Heart left ventricle (tissue), 16 donors: ENCODE measurements at regions of chr2 and their contacts with region 1.

Region 1: GRCh38 chr2:30691948-30692828 is 115.1 kb downstream of the CAPN13 start:
- DNase-seq: peak in 2 of 5 donors; percentile 61 to 63
- ATAC-seq: peak in 3 of 4 donors; percentile 63 to 75 (median 65)
- H3K4me3 ChIP-seq: no peak overlapping the region
- H3K27ac ChIP-seq: peak overlapping the region in 6 of 12 donors; percentile 29 to 80 (median 48)
- H3K4me1 ChIP-seq: peaks cover 0 to 53% (median 27%) of the 10 kb centered on the region in 12 donors
- H3K27me3 ChIP-seq: no peaks in the 10 kb centered on the region
- CTCF ChIP-seq: peak in 10 of 12 donors; percentile 29 to 57 (median 44)
- POLR2A ChIP-seq: no peak

Region 2: GRCh38 chr2:29238497-29238896 is 1453.7 kb before region 1 on chr2:
- intact Hi-C with region 1: no loop called
- DNase-seq: no peak
- ATAC-seq: peak in 1 of 4 donors; percentile 62
- H3K4me3 ChIP-seq: no peak overlapping the region
- H3K27ac ChIP-seq: no peak overlapping the region
- H3K4me1 ChIP-seq: no peaks in the 10 kb centered on the region
- H3K27me3 ChIP-seq: peaks cover 0 to 49% (median 5%) of the 10 kb centered on the region in 9 donors
- CTCF ChIP-seq: peak; percentile 18 to 59 (median 34)
- POLR2A ChIP-seq: no peak

Region 3: DNA sequence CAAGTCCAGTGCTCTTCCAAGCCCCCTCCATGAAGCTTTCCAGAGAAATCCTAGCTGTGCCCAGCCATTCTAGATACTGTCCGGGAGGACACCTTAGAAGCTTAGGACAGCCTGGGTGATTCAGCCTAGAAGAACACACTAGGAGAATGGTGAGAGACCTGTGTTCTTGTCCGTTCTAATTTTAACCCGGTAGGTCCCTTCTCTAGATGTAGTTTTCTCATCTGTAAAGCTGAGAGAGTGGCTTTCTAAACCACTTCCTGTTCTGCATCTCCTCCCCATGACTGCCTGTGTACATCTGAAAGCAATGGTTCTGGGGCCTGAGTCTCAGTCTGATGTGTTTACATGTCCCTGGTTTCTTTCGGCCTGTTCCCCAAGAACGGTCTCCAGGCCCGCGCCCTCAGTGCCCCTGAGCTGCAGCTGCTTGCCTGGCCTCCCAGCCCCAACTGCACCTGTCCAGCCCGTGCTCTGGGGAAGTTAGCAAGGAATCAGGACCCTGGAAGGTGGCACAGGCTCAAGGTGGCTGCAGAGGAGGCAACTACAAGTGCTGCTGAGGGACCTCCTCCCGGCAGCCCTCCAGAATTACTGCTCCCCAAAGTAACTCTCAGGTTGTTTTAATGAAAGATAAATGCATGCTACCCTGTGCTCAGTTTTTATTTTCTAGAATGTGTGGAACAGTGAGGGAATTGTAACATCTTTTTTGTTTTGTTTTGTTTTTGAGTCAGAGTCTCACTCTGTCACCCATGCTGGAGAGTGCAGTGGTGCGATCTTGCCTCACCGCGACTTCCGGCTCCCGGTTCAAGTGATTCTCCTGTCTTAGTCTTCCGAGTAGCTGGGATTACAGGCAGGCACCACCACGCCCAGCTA is 355.0 kb before region 1 on chr2:
- intact Hi-C with region 1: loop called in 2 of 10 experiments (anchors 5 to 10 kb)
- DNase-seq: no peak
- ATAC-seq: no peak
- H3K4me3 ChIP-seq: no peak overlapping the region
- H3K27ac ChIP-seq: peak overlapping the region in 4 of 12 donors; percentile 26 to 77 (median 60)
- H3K4me1 ChIP-seq: peaks cover 0 to 46% (median 25%) of the 10 kb centered on the region in 12 donors
- H3K27me3 ChIP-seq: no peaks in the 10 kb centered on the region
- CTCF ChIP-seq: no peak
- POLR2A ChIP-seq: no peak

Region 4: DNA sequence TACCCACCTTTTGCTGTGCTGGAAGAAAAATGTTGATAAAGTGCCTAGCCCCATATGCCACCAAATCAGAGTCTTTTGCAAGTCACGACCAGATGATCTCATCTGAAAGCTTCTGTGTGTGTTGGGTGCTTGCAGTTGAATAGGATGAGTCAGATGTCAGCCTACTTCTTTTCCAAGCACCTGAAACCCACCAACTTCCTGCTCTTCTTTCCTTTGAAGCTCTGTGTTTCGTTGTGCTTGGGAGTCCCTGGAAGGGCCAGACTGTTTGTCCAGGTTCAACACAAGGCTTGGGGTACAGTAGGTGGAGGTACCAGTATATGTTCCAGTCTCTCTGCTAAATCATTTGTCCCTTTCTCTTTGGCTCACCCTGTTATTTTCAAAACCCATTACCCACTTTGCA is 282.0 kb before region 1 on chr2:
- intact Hi-C with region 1: loop called in 1 of 10 experiments (anchors 5 kb)
- DNase-seq: no peak
- ATAC-seq: no peak
- H3K4me3 ChIP-seq: no peak overlapping the region
- H3K27ac ChIP-seq: peak overlapping the region in 11 of 12 donors; percentile 51 to 91 (median 82)
- H3K4me1 ChIP-seq: peaks cover 3 to 77% (median 58%) of the 10 kb centered on the region in 12 donors
- H3K27me3 ChIP-seq: no peaks in the 10 kb centered on the region
- CTCF ChIP-seq: no peak
- POLR2A ChIP-seq: no peak

Region 5: GRCh38 chr2:30481323-30481800 is 210.8 kb before region 1 on chr2:
- intact Hi-C with region 1: loop called in 1 of 10 experiments (anchors 10 kb)
- DNase-seq: peak in 4 of 5 donors; percentile 34 to 69 (median 48)
- ATAC-seq: peak in 3 of 4 donors; percentile 38 to 50 (median 43)
- H3K4me3 ChIP-seq: no peak overlapping the region
- H3K27ac ChIP-seq: peak overlapping the region in 10 of 12 donors; percentile 2 to 62 (median 44)
- H3K4me1 ChIP-seq: peaks cover 3 to 49% (median 26%) of the 10 kb centered on the region in 12 donors
- H3K27me3 ChIP-seq: no peaks in the 10 kb centered on the region
- CTCF ChIP-seq: no peak
- POLR2A ChIP-seq: no peak

Region 6: GRCh38 chr2:30631051-30631671 is 61.0 kb before region 1 on chr2:
- intact Hi-C with region 1: loop called in 2 of 10 experiments (anchors 5 kb)
- DNase-seq: no peak
- ATAC-seq: peak in 3 of 4 donors; percentile 39 to 55 (median 41)
- H3K4me3 ChIP-seq: no peak overlapping the region
- H3K27ac ChIP-seq: peak overlapping the region in 3 of 12 donors; percentile 10 to 49 (median 13)
- H3K4me1 ChIP-seq: peaks cover 0 to 34% (median 4%) of the 10 kb centered on the region in 12 donors
- H3K27me3 ChIP-seq: no peaks in the 10 kb centered on the region
- CTCF ChIP-seq: no peak
- POLR2A ChIP-seq: no peak

Region 7: DNA sequence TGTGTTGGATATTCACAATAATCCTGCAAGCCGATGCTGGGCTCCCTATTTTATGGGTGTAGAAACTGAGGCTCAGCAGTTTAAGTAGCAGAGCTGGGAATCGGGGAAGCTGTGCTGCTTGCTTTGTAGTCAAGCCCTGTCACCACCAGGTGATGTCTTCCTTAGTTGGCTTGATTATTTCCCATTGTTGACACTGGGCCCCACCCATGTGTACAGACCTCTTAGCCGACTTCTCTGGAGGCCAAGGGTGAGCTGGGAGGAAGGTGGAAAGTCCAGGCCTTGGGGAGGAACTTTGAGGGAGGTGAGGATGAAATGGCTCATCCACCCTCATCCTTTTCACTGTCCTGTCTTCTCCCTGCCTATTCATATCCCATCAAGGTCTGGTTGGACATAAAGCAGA is 55.0 kb after region 1 on chr2:
- intact Hi-C with region 1: no loop called
- DNase-seq: no peak
- ATAC-seq: no peak
- H3K4me3 ChIP-seq: no peak overlapping the region
- H3K27ac ChIP-seq: no peak overlapping the region
- H3K4me1 ChIP-seq: no peaks in the 10 kb centered on the region
- H3K27me3 ChIP-seq: peaks cover 0 to 10% (median 0%) of the 10 kb centered on the region in 9 donors
- CTCF ChIP-seq: no peak
- POLR2A ChIP-seq: no peak

Region 8: GRCh38 chr2:30798536-30798991 is 106.4 kb after region 1 on chr2:
- intact Hi-C with region 1: no loop called
- DNase-seq: no peak
- ATAC-seq: peak in 1 of 4 donors; percentile 64
- H3K4me3 ChIP-seq: no peak overlapping the region
- H3K27ac ChIP-seq: no peak overlapping the region
- H3K4me1 ChIP-seq: peaks cover 0 to 15% (median 2%) of the 10 kb centered on the region in 12 donors
- H3K27me3 ChIP-seq: peaks cover 0 to 4% (median 0%) of the 10 kb centered on the region in 9 donors
- CTCF ChIP-seq: no peak
- POLR2A ChIP-seq: no peak